Activated CD8-positive, alpha-beta memory T cell treated with anti-CD3 and anti-CD28 coated beads, Interleukin-2, amount 10 ng/mL, durations not matched to agents 7 days and 5 days (primary cell): ENCODE measurements at regions of chr1 and their contacts with region 1.

Region 1: DNA sequence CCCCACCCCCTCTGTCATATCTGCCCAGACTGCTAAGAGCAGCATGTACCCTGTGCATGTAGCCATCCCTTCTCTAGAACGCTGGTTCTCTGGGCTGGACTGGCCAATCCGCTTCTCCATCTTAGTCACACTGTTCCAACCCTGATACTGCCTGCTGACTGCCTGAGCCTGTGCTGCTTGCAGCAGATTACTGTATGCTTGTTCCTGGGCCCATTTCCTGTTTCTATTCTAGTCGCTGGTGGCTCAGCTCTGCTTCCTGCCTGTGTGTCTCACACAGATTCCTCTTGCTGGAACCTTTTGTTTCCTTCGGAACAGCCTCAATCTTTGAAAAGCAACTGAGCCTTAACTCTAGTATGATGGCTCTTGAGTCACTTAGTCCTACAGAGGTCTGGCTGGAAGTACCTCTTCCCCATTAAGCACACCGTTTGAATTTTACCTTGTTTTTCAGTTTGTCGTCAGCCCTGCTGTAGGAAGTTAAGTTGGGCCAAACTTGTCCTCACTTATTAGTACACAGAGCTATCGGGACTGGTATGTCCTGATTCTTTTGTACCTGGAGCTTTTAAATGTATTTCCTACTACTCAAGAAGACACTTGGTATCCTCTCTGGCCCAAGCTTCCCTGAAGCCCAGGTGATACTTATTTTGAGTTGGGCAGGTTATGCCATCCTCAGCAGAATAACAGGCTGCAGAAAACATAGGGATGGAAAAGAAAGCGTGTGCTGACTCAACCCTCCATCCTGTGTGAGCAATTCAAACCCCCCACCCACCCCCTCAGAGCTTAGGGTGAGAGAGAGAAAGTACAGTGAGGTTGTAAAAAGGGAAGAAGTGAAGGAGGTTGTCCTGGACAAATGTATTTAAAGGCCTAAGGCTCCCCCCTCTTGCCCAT is 43.4 kb upstream of the PIGV start:
- DNase-seq: peak; percentile 95
- ATAC-seq: peak; percentile 99
- H3K4me3 Mint-ChIP-seq: peak overlapping the region; percentile 67
- H3K27ac Mint-ChIP-seq: peak overlapping the region; percentile 90
- H3K4me1 Mint-ChIP-seq: peaks cover 70% of the 10 kb centered on the region
- H3K27me3 Mint-ChIP-seq: no peaks in the 10 kb centered on the region

Region 2: DNA sequence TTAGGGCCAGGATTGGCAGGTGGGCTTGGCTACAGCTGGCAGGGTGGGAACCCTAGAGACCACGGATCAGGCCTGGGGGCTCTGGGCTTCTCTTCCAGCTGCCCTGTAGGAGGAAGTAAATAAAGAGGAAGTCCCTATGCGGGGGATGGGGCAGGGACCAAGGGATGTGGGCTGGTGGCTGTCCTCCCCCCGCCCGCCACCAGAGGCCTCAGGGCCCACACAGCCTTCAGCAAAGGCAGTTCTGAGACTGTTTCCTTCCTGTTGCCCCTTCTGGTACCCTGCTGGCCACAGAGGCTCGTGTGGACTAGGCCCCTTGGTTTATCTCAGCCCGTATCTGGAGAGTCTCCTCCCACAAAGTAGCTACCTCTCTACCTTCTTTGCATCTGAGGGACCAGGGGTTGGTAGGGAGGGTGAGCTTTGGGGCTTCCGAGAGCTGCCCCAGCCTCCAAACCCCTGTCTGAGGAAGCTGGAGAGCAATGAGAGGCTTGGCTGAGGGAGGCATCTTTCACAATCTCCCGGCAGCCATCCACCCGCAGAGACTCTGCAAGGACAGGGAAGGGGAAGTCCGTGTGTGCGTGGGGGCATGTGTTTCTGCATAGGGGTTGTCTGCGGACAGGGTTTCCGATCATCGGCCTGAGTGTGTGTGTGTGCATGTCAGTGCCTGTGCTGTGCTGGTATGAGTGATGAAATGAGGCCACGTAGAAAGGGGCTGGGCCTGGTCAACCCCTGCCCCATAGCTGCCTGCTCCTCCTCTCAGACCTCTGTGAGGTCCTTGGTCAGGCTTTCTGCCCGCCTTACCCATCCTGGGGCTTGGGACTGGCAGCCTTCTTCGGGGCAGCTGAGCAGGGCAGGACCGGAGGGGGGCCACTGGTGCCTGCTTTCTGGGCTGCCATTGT is 202.3 kb before region 1 on chr1:
- CTCF ChIA-PET with region 1: no interaction called
- DNase-seq: peak; percentile 95
- ATAC-seq: peak; percentile 73
- H3K4me3 Mint-ChIP-seq: peak overlapping the region; percentile 73
- H3K27ac Mint-ChIP-seq: peak overlapping the region; percentile 97
- H3K4me1 Mint-ChIP-seq: peaks cover 85% of the 10 kb centered on the region
- H3K27me3 Mint-ChIP-seq: no peaks in the 10 kb centered on the region

Region 3: GRCh38 chr1:26701266-26701994 is 42.9 kb before region 1 on chr1:
- CTCF ChIA-PET with region 1: interaction called, 13 read pairs
- DNase-seq: no peak
- ATAC-seq: no peak
- H3K4me3 Mint-ChIP-seq: no peak overlapping the region
- H3K27ac Mint-ChIP-seq: no peak overlapping the region
- H3K4me1 Mint-ChIP-seq: peaks cover 15% of the 10 kb centered on the region
- H3K27me3 Mint-ChIP-seq: no peaks in the 10 kb centered on the region

Region 4: DNA sequence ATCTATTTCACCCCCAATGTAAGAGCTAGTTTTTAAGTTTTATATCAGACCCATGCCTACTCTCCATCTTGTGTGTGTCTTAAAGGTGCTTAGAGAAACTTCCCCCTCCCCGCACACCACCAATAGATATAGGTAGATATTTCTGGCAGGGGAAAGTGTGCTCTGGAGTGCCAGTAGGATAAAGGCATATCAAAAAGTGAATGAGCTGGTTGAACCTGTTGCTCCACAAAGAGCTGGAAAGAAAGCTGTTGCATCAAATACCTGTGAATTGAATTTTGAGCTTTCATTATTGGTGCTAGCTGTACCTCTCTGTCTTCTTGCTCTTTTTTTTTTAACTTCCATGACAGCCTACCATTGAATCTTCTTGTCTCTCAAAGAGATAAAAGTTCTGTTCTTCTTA is 15.7 kb before region 1 on chr1:
- CTCF ChIA-PET with region 1: interaction called, 11 read pairs
- DNase-seq: no peak
- ATAC-seq: no peak
- H3K4me3 Mint-ChIP-seq: no peak overlapping the region
- H3K27ac Mint-ChIP-seq: peak overlapping the region; percentile 53
- H3K4me1 Mint-ChIP-seq: peaks cover 80% of the 10 kb centered on the region
- H3K27me3 Mint-ChIP-seq: no peaks in the 10 kb centered on the region